ENCODE measurements at regions of chr17 and their contacts with region 1.

Region 1: GRCh38 chr17:78781948-78782916 is at the start of gene CYTH1:
- DNase-seq: peak; percentile 95 to 100 (median 98)
- ATAC-seq: peak; percentile 39 to 61
- H3K4me3 Mint-ChIP-seq: peak within 1 kb of the TSS; percentile 88 to 98 (median 94)
- H3K27ac Mint-ChIP-seq: peak within 1 kb of the TSS; percentile 91 to 99 (median 95)
- H3K4me1 Mint-ChIP-seq: peaks cover 12 to 75% (median 55%) of the 10 kb centered on the region in 4 donors
- H3K27me3 Mint-ChIP-seq: no peaks in the 10 kb centered on the region
- polyA plus RNA-seq, gene CYTH1: 220 to 320 (median 243) TPM

Region 2: GRCh38 chr17:78588258-78589030 is 193.8 kb before region 1 on chr17:
- POLR2A ChIA-PET with region 1: no interaction called
- DNase-seq: no peak
- ATAC-seq: no peak
- H3K4me3 Mint-ChIP-seq: no peak overlapping the region
- H3K27ac Mint-ChIP-seq: no peak overlapping the region
- H3K4me1 Mint-ChIP-seq: peaks cover 4 to 9% (median 6%) of the 10 kb centered on the region in 4 donors
- H3K27me3 Mint-ChIP-seq: peaks cover 0 to 8% (median 5%) of the 10 kb centered on the region in 5 donors

Region 3: GRCh38 chr17:78723001-78723796 is 59.0 kb before region 1 on chr17:
- POLR2A ChIA-PET with region 1: interaction called, 13 read pairs
- DNase-seq: no peak
- ATAC-seq: no peak
- H3K4me3 Mint-ChIP-seq: peak overlapping the region; percentile 45 to 83 (median 76)
- H3K27ac Mint-ChIP-seq: peak overlapping the region; percentile 67 to 96 (median 90)
- H3K4me1 Mint-ChIP-seq: peaks cover 69 to 98% (median 95%) of the 10 kb centered on the region in 4 donors
- H3K27me3 Mint-ChIP-seq: no peaks in the 10 kb centered on the region

Region 4: DNA sequence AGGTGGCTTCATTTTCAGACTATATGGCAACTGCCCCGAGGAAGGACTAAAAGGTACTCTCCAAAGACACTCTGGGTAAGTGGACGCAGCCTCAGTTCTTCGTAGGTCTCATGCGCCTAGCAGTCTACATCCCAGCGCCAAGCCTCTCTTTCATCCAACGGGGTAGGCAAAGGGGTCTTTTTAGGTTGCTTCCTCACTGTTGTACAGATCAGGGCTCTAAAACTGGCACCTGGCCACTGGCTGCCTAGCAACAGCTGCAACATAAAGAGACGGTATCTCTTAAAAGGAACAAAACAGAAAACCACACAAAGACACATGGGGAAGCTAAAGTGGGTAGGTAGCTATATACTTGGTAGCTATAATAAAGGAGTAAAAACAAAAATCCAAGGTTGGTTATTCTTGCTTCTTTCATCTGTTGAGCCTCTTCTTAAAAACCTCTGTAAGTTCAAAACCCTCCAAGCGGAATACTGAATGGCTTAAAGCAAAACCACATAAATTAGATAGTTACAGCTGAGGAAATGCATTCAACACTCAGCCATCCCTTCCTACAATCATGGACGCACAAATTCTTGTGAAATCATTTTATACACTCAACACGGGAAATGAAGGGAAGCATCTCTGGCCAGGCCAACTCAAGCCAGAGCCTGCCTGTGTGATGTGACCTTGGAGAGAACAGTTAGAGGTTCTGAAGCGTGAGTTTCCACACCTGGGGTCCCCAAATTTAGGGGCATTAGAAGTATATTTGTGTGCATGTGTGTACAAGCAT is 22.8 kb before region 1 on chr17:
- POLR2A ChIA-PET with region 1: interaction called, 188 read pairs
- DNase-seq: peak; percentile 68 to 97 (median 90)
- ATAC-seq: peak; percentile 75 to 87
- H3K4me3 Mint-ChIP-seq: peak overlapping the region; percentile 61 to 88 (median 79)
- H3K27ac Mint-ChIP-seq: peak overlapping the region; percentile 90 to 99 (median 98)
- H3K4me1 Mint-ChIP-seq: peaks cover 26 to 90% (median 76%) of the 10 kb centered on the region in 4 donors
- H3K27me3 Mint-ChIP-seq: no peaks in the 10 kb centered on the region

Region 5: GRCh38 chr17:78798695-78799559 is 16.7 kb after region 1 on chr17:
- POLR2A ChIA-PET with region 1: interaction called, 12 read pairs
- DNase-seq: peak in 4 of 10 donors; percentile 35 to 59 (median 54)
- ATAC-seq: peak; percentile 48 to 49
- H3K4me3 Mint-ChIP-seq: peak overlapping the region in 8 of 10 donors; percentile 3 to 76 (median 41)
- H3K27ac Mint-ChIP-seq: peak overlapping the region; percentile 72 to 97 (median 89)
- H3K4me1 Mint-ChIP-seq: peaks cover 32 to 63% (median 49%) of the 10 kb centered on the region in 4 donors
- H3K27me3 Mint-ChIP-seq: no peaks in the 10 kb centered on the region

Region 6: DNA sequence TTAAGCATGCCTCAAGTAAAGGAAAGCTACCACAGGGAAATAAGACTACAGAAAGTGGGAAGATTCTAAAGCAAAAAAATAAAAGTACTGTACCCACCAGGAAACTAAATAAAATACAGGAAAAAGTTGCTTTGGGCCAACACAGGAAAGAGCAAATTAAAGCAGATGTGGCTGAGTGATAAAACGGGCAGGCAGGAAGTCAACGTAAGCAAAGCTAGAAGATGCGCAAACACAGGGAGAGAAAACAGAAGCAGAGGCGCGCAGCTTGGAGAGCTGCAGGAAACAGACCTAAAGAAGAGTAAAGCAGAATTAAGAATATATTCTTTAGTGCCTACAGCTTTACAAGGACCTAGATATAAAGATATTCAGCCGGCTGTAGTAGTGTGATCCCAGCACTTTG is 36.7 kb after region 1 on chr17:
- POLR2A ChIA-PET with region 1: interaction called, 18 read pairs
- DNase-seq: peak; percentile 28 to 88 (median 76)
- ATAC-seq: peak; percentile 68 to 80
- H3K4me3 Mint-ChIP-seq: peak overlapping the region; percentile 49 to 83 (median 72)
- H3K27ac Mint-ChIP-seq: peak overlapping the region; percentile 63 to 98 (median 96)
- H3K4me1 Mint-ChIP-seq: peaks cover 15 to 60% (median 50%) of the 10 kb centered on the region in 4 donors
- H3K27me3 Mint-ChIP-seq: no peaks in the 10 kb centered on the region

Measured in naive thymus-derived CD8-positive, alpha-beta T cell (primary cell).